Keratinocyte (primary cell): ENCODE measurements at regions of chr4 and their contacts with region 1.

Region 1: GRCh38 chr4:53929955-53930798 is 134.2 kb downstream of the CHIC2 start:
- DNase-seq: no peak
- H3K4me3 ChIP-seq: no peak overlapping the region
- H3K27ac ChIP-seq: no peak overlapping the region
- H3K4me1 ChIP-seq: peaks cover 6% of the 10 kb centered on the region
- H3K27me3 ChIP-seq: no peaks in the 10 kb centered on the region
- CTCF ChIP-seq: peak; percentile 57 to 97 (median 94)

Region 2: DNA sequence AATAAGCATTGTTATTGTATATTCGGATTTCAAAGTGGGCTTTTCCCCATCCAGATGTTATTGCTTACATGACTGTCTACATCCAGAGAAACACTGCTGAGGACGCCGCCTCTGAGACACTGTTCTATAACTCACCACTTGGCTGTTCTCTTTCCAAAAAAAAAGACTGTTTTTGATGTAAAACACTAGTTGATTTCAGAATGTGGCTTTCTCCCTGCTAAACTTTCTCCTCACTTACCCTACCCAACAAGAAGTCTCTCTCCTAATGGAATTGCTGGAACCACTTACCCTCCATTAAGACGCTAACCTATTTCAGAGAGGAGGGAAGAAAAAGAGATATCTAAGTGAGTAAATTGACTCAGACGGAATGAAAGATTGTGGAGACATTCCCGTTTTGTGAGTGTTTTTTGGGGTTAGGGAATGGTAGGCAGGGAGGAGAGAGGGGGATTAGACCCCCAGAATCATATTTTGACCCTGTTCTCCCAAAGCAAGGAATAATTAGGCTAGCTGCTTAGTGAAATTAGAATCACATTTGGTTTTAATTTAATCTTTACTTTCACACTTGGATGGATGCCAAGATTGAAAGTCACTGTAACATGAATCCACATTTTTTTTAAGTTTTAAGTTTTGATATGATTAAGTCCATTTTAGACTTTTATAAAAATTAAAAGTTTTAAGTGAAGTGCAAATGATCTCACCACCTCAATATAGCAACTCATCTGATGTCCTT is 40.7 kb before region 1 on chr4:
- dilution Hi-C with region 1: no loop called
- DNase-seq: no peak
- H3K4me3 ChIP-seq: no peak overlapping the region
- H3K27ac ChIP-seq: no peak overlapping the region
- H3K4me1 ChIP-seq: no peaks in the 10 kb centered on the region
- H3K27me3 ChIP-seq: peaks cover 3% of the 10 kb centered on the region
- CTCF ChIP-seq: no peak

Region 3: GRCh38 chr4:54217642-54218495 is 287.7 kb after region 1 on chr4:
- dilution Hi-C with region 1: loop called (anchors 25 kb)
- DNase-seq: peak; percentile 66
- H3K4me3 ChIP-seq: peak overlapping the region; percentile 15 to 61 (median 36)
- H3K27ac ChIP-seq: peak overlapping the region; percentile 13
- H3K4me1 ChIP-seq: peaks cover 13% of the 10 kb centered on the region
- H3K27me3 ChIP-seq: no peaks in the 10 kb centered on the region
- CTCF ChIP-seq: peak; percentile 80 to 91 (median 84)